ENCODE measurements at regions of chr5 and their contacts with region 1.

Region 1: DNA sequence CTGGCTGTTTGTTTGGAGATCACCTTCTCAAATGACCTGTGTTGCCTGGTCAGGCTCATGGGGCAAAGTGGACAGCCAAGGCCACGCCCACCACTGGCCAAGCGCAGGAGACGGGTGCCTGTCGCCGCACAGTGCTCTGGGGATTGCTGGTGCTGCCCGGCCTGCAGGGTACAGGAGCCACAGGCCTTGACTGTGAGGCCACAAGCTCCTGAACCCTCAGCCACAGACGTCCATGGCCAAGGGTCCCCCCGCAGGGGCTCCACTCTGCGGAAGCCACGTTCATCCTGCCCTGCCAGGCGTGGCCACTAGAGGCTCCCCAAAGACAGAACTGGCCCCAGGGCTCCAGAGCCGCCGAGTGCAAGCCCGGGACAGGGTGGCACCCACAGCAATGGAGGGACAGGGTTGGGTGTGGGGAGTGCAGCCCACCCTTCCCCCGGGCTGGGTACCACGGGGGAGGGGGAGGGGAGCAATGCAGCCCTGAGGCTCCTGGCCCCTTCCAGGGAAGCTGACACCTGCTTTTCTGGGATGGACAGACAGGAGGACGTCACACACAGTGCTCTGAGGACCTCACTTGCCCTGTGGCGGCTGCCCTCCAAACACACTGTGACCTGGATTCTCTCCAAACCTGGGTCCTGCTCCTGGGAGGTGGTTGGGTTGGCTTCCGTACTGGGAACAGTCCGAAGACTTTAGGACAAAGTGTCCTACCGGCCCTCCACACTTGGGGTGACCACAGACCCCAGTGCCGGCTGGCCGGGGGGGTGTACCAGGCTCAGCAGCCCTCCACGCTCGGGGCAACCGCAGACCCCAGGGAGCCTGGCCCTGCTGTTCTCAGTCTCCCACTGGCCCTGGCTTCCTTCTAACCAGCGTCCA is 21.5 kb downstream of the TPPP start:
- DNase-seq: peak; percentile 76
- ATAC-seq: peak; percentile 64

Region 2: GRCh38 chr5:528625-529511 is 142.8 kb before region 1 on chr5:
- intact Hi-C with region 1: no loop called
- DNase-seq: peak; percentile 37
- ATAC-seq: no peak

Region 3: GRCh38 chr5:626850-627249 is 44.8 kb before region 1 on chr5:
- intact Hi-C with region 1: no loop called
- DNase-seq: no peak
- ATAC-seq: no peak

Region 4: DNA sequence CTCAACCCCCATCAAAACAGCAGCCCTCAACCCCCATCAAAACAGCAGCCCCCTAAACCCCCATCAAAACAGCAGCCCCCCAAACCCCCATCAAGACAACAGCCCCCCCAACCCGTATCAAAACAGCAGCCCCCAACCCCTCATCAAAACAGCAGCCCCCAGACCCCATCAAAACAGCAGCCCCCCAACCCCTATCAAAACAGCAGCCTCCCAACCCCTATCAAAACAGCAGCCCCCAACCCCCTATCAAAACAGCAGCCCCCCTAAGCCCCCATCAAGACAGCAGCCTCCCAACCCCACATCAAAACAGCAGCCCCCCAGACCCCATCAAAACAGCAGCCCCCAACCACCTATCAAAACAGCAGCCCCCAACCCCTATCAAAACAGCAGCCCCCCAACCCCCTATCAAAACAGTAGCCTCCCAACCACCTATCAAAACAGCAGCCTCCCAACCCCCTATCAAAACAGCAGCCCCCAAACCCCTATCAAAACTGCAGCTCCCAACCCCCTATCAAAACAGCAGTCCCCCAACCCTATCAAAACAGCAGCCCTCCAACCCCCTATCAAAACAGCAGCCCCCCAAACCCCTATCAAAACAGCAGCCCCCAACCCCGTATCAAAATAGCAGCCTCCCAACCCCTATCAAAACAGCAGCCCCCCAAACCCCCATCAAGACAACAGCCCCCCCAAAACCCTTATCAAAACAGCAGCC is 20.3 kb after region 1 on chr5:
- intact Hi-C with region 1: loop called (anchors 2 kb)
- DNase-seq: no peak
- ATAC-seq: no peak

Region 5: DNA sequence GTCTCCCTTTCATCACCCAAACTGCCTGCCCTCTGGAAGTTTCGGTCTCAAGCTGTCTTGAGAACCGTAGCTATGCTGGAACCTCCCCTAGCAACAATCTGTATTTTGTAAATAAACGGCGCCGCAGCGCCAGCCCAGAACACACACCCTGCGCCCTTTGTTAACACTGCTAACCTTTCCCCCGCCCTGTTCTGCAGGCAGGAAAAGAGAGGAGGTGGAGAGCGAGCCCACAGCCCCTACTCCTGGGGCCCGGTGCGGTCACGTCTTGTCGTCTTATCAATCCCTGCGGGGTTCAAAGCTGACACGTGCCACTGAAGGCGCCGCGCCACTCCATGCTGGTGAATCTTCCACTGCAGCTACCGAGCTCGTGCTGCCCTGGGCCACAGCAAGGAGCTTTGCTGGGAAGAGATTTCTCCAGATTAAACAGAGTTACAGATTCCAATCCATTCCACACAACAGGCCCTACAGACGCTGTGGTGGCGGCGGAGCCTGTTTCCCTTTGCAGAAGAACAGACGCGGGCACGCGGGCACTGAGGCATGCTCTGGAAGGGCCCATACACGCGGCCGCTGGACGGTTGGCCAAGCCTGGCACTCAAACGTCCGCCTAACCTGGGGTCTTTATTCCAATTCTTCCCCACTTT is 87.5 kb after region 1 on chr5:
- intact Hi-C with region 1: loop called (anchors 5 kb)
- DNase-seq: peak; percentile 85
- ATAC-seq: peak; percentile 72

Region 6: DNA sequence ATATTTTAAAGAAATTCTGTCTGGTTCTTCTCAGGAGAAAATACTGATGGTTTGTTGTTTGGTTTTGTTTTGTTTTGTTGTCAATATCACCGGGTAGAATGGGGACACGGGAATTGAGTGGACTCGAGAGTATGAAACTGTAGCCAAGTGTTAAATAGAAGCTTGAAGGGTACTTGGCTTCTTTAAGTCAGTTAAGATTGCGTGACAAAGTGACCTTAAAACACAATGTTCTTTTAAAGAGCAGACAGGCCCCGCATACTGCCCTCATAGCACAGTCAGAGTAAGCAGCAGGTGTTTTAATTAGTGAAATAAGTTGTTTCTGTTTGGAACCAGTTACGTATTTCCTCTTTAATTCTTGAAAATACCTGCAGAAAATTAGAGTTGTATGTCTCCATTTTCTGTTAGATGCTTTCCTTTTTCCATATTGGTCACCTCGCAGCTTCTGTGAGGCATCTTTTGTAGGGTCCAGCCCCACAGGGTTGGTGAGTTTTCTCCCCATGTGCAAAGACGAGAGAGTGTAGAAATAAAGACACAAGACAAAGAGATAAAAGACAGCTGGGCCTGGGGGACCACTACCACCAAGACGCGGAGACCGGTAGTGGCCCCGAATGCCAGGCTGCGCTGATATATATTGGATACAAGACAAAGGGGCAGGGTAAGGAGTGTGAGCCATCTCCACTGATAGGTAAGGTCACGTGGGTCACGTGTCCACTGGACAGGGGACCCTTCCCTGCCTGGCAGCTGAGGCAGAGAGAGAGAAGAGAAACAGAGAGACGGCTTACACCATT is 230.6 kb after region 1 on chr5:
- intact Hi-C with region 1: loop called (anchors 2 kb)
- DNase-seq: no peak
- ATAC-seq: peak; percentile 52

Region 7: DNA sequence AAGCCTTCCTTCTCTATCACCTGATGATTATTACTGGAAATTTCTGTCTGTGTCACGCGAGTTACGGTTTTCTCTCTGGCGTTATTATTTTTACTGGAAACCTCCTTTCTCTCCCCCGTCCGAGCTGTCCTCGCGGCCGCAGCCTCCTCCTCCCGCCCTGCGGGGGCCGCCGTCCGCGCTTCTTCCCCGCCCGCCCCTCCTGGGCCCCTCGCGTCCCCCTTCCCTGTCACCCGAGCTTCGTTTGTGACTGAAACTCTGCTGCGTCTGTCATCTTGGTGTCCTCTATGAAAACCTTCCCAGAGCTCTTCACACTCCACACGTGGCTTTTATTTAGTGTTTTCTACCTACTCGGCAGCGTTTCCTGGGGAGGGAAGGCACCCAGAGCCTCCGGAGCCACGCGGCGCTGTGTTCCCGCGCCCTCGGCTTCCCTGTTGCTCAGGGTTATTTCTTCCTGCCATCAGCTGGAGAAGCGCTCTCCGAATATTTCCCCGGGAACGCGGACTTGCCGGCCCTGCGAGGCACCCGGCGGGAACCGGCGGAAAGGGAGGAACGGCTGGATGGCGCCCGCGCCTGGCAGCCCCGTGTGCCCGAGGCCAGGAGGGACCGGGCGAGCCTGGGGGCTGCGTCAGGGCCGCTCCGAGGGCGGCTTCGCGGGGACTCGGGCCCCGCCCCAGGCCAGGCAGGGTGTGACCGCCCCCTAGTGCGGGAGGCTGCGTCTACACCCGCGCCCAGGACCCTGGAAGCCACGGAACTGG is 254.9 kb after region 1 on chr5:
- intact Hi-C with region 1: no loop called
- DNase-seq: no peak
- ATAC-seq: peak; percentile 87